RWPE1 (cell line): ENCODE measurements at regions of chr15 and their contacts with region 1.

Region 1: GRCh38 chr15:74036271-74037170 is 42.0 kb downstream of the PML start:
- DNase-seq: peak; percentile 55
- H3K27ac ChIP-seq: peak overlapping the region; percentile 4; the same call in 1 of the 2 replicates
- CTCF ChIP-seq: peak; percentile 50

Region 2: DNA sequence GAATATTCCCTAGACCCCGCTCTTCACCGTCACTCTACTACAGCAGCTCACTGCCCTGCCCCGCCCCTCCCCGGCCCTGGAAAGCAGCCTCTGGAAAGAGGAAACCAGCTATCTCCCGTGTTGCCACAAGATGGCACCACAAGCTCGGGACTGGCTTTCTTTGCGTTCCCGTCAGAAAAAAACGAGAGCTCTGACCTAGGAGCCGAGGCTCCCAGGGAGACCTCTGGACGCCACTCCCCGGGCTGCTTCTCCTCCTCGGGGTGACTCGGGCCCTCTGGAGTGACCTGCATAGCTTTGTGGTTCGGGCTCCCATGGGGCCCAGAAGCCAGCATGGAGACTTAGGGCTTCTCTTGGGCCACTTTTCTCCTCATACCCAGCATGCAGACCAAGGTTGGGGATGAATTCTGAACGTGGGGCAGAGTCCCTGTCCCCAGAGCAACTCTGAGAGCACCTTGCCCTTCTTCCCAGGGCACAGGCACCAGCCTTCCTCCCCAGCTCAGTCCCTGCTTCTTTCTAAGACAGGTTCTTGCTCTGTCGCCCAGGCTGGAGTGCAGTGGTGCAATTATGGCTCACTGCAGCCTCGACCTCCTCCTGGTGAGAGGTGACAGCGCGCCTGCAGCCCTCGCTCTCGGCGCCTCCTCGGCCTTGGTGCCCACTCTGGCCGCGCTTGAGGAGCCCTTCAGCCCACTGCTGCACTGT is 63.4 kb before region 1 on chr15:
- CTCF ChIA-PET with region 1: interaction called, 26 read pairs
- POLR2A ChIA-PET with region 1: interaction called, 3 read pairs
- DNase-seq: peak; percentile 85
- H3K27ac ChIP-seq: no peak overlapping the region; the same call in 1 of the 2 replicates
- CTCF ChIP-seq: peak; percentile 96

Region 3: DNA sequence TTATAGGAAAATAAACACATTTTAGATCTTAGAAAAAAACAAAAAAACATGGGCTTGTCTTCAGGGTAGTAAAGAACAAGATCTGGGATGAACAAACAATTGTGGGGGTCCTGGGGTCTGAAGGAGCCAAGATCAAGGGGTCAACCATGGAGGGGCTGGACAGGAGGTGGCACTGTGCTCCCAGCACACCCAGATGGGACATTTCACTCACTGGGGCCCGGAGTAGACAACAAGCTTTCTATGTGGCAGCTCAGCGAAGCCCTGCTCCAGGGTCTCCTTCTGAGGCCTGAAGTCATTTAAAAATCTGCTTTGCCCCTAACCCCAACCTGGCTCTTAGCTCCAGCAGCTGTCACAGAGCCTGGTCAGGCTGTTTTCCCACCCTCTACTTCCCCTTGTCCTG is 11.3 kb after region 1 on chr15:
- CTCF ChIA-PET with region 1: interaction called, 12 read pairs
- POLR2A ChIA-PET with region 1: no interaction called
- DNase-seq: no peak
- H3K27ac ChIP-seq: no peak overlapping the region
- CTCF ChIP-seq: no peak